AG04449 (cell line): ENCODE measurements at regions of chr1 and their contacts with region 1.

Region 1: GRCh38 chr1:29181413-29182225 is at the start of gene SRSF4:
- DNase-seq: peak; percentile 86
- H3K4me3 ChIP-seq: peak within 1 kb of the TSS; percentile 95
- CTCF ChIP-seq: peak; percentile 93

Region 2: DNA sequence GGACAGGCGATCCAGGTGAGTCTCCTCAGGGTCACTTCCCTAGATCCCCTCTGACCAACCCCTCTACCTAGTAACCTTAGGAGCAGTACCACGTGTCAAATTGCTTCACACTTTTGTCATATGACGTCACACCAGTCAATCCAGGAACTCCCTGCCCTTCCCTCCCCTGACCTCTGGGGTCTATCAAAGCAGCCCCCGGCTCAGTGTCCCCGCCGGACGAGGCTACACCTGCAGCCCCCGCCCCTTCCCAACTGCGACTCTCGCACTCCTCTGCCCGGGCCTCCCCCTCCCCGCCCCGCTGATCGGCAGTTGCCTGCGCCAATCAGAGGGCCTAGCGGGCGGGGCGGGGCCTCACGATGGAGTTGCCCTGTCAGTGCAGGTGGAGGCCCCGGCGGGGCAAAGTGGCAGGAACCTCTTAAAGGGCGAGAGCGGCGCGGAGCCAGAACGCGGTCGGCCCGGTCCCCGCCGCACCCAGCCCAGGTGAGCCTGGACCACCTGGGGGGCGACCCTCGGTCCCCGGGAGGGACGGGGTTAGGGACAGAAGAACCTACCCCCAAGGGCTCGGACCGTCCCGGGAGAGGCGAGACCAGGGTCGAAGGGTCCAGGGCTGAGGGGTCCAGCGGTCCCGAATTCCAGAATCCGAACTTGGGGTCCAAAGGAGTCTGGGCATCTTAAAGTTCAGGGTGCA is 294.7 kb before region 1 on chr1:
- CTCF ChIA-PET with region 1: interaction called, 15 read pairs
- POLR2A ChIA-PET with region 1: no interaction called
- DNase-seq: no peak
- H3K4me3 ChIP-seq: peak overlapping the region; percentile 87
- CTCF ChIP-seq: no peak

Region 3: GRCh38 chr1:29124366-29125236 is 57.0 kb before region 1 on chr1:
- CTCF ChIA-PET with region 1: interaction called, 24 read pairs
- POLR2A ChIA-PET with region 1: interaction called, 9 read pairs
- DNase-seq: no peak
- H3K4me3 ChIP-seq: peak overlapping the region; percentile 73
- CTCF ChIP-seq: peak; percentile 91

Region 4: DNA sequence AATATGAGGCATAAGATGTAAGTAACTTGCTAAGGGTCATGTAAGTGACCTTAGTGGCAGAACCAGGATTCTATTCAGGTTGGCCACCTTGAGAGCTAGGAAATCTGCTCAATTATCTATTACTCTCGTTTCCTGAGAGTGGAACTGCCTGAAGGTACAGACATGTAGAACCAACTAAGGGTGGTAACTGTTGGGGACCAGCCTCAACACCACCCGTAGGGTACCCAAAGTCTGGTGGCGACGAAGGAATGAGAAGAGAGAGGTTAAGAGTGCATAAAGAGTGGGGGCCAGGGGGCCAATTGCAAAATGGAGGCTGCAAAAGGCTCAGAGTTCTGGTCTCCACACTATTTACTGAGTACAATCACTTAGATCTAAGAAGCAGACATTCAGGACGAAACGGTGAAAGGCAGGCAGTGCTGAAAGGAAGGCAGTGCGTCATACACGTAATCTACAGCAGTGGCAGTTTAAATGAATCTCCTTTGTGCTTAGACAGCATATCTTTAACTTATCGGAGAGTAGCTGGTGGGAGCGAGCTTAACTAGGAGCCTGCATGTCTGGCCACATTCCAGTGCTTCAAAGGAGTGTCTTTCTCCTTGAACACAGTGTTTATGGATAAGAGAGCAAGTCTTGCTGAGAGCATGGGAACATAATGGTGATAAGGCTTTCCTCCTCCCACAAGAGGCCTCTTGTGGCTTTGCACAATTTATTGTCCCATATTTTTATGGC is 24.9 kb before region 1 on chr1:
- CTCF ChIA-PET with region 1: interaction called, 46 read pairs
- POLR2A ChIA-PET with region 1: no interaction called
- DNase-seq: no peak
- H3K4me3 ChIP-seq: no peak overlapping the region
- CTCF ChIP-seq: no peak

Region 5: GRCh38 chr1:29171089-29171488 is 10.5 kb before region 1 on chr1:
- CTCF ChIA-PET with region 1: interaction called, 29 read pairs
- POLR2A ChIA-PET with region 1: interaction called, 7 read pairs
- DNase-seq: no peak
- H3K4me3 ChIP-seq: no peak overlapping the region
- CTCF ChIP-seq: no peak

Region 6: DNA sequence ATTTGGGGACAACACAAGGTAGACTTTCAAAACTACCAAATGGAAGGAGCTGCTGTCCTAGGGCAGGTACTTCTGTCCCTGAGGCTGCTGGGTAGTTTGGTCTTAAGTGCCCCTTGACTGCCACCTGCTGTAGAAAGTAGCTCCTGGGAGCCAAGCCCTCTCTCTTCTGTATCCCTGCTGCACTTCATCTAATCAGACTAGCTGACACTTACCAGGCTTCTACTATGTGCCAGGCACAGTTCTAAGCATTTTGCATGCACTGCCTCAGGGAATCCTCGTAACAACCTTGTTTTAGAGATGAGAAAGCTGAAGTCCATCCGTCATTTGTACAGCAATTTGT is 15.9 kb after region 1 on chr1:
- CTCF ChIA-PET with region 1: interaction called, 216 read pairs
- POLR2A ChIA-PET with region 1: interaction called, 15 read pairs
- DNase-seq: no peak
- H3K4me3 ChIP-seq: no peak overlapping the region
- CTCF ChIP-seq: peak; percentile 51

Region 7: GRCh38 chr1:29202584-29203340 is 21.1 kb after region 1 on chr1:
- CTCF ChIA-PET with region 1: interaction called, 216 read pairs
- POLR2A ChIA-PET with region 1: interaction called, 15 read pairs
- DNase-seq: peak; percentile 91
- H3K4me3 ChIP-seq: no peak overlapping the region
- CTCF ChIP-seq: peak; percentile 93

Region 8: GRCh38 chr1:29332204-29332603 is 150.6 kb after region 1 on chr1:
- CTCF ChIA-PET with region 1: no interaction called
- POLR2A ChIA-PET with region 1: no interaction called
- DNase-seq: no peak
- H3K4me3 ChIP-seq: no peak overlapping the region
- CTCF ChIP-seq: peak; percentile 39